IMR-90 (cell line): ENCODE measurements at regions of chr15 and their contacts with region 1.

Region 1: GRCh38 chr15:84600851-84601838 is at the start of gene ZSCAN2:
- DNase-seq: peak; percentile 91
- ATAC-seq: peak; percentile 98
- H3K4me3 ChIP-seq: peak within 1 kb of the TSS; percentile 65
- H3K27ac ChIP-seq: peak within 1 kb of the TSS; percentile 70
- H3K4me1 ChIP-seq: peaks cover 4% of the 10 kb centered on the region
- H3K27me3 ChIP-seq: no peaks in the 10 kb centered on the region
- CTCF ChIP-seq: no peak
- POLR2A ChIP-seq: no peak
- RAD21 ChIP-seq: no peak
- total RNA-seq, gene ZSCAN2: 15.0 and 18.3 TPM in 2 replicates

Region 2: DNA sequence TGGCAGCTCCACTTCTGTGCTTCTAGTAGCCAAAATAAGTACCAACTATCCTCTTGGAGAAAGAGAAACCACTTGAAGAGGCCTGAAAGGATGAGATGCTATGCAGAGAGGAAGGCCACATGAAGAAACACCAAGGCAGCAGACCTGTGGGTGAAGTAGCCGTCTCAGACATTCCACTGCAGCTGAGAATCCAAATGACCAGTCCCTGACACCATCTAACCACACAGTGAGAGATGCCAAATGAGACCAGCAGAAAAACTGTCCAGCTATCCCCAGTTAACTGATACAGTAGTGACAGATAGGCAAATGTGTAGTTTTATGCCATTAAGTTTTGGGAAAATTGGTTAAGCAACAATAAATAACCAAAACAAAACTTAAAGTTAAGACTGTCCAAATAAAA is 48.2 kb before region 1 on chr15:
- CTCF ChIA-PET with region 1: no interaction called
- POLR2A ChIA-PET with region 1: no interaction called
- dilution Hi-C with region 1: no loop called
- in situ Hi-C with region 1: no loop called
- intact Hi-C with region 1: no loop called
- DNase-seq: peak; percentile 50
- ATAC-seq: no peak
- H3K4me3 ChIP-seq: no peak overlapping the region
- H3K27ac ChIP-seq: no peak overlapping the region
- H3K4me1 ChIP-seq: peaks cover 1% of the 10 kb centered on the region
- H3K27me3 ChIP-seq: no peaks in the 10 kb centered on the region
- CTCF ChIP-seq: no peak
- POLR2A ChIP-seq: no peak
- RAD21 ChIP-seq: no peak

Region 3: GRCh38 chr15:84633311-84634227 is 32.4 kb after region 1 on chr15:
- CTCF ChIA-PET with region 1: interaction called, 5 read pairs
- POLR2A ChIA-PET with region 1: no interaction called
- dilution Hi-C with region 1: no loop called
- in situ Hi-C with region 1: no loop called
- intact Hi-C with region 1: loop called (anchors 2 kb)
- DNase-seq: peak; percentile 67
- ATAC-seq: peak; percentile 71
- H3K4me3 ChIP-seq: peak overlapping the region; percentile 62
- H3K27ac ChIP-seq: peak overlapping the region; percentile 76
- H3K4me1 ChIP-seq: peaks cover 11% of the 10 kb centered on the region
- H3K27me3 ChIP-seq: no peaks in the 10 kb centered on the region
- CTCF ChIP-seq: no peak
- POLR2A ChIP-seq: no peak; the same call in 1 of the 2 replicates
- RAD21 ChIP-seq: no peak